A549 (cell line): ENCODE measurements at regions of chr12 and their contacts with region 1.

Region 1: GRCh38 chr12:31220633-31221565 is 105.1 kb downstream of the SINHCAF start:
- DNase-seq: peak in 1 of 2 experiments; percentile 25
- ATAC-seq: peak in 1 of 2 experiments; percentile 17; a peak in 1 of 6 replicates
- H3K4me3 ChIP-seq: no peak overlapping the region
- H3K27ac ChIP-seq: no peak overlapping the region
- H3K4me1 ChIP-seq: no peaks in the 10 kb centered on the region
- CTCF ChIP-seq: no peak
- EP300 ChIP-seq: no peak
- POLR2A ChIP-seq: no peak
- RAD21 ChIP-seq: no peak

Region 2: DNA sequence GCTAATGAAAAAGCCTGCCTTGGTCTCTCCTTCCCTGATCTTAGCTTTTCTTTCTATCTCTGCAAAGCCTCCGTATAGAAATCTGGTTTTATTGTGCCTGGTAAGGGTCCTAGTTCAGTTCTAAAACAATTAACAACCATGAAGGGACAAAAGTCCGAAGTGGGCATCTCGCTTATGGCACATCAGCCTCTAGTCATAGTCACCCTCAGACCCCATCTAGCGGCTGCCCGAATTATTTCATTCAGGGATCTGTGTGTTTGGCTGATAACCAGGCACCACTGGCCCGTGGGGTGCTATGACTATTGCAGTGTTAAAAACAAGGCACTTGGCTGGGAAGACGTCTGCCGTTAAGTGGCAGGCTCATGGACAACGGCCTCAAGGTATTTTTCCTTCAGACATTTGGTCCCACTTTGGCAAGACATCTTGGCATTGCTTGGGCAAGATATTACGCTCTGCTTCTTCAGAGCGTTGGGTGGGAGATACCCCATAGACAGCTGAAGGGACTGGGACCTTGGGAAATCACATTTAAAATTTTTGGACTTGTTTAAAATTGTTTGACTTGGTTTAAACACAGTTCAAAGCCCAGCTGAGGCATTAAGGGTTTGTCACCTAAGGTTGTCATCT is 18.0 kb after region 1 on chr12:
- CTCF ChIA-PET with region 1: interaction called, 60 read pairs
- POLR2A ChIA-PET with region 1: no interaction called
- DNase-seq: peak; percentile 67 to 79
- ATAC-seq: peak; percentile 85 to 91; a peak in 5 of 6 replicates
- H3K4me3 ChIP-seq: 0 out of 3 replicates have a peak overlapping the region, but pooled peaks have one; percentile 16
- H3K27ac ChIP-seq: no peak overlapping the region
- H3K4me1 ChIP-seq: no peaks in the 10 kb centered on the region
- CTCF ChIP-seq: peak; percentile 71
- EP300 ChIP-seq: no peak
- POLR2A ChIP-seq: no peak
- RAD21 ChIP-seq: peak; percentile 58 to 70